ENCODE measurements at regions of chr4 and their contacts with region 1.

Region 1: DNA sequence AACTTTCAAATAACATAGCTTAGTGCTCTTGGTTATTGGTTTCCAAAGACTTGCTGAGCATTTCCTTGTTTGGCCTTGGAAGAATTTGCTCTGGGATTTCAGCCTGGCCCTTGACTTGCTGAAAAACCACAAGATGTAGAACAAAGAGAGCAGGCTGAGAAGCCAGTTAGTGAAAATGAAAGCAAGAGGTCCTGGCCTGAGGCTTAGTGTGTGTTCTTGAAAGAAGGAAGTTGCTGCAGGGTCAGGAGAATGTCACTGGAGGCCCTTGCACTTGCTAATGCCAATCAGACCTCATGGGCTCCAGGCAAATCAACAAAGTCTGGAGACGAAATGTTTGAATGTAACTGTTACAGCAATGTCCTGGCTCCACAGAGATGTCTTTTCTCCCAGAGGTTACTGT is 79.4 kb downstream of the SYNPO2 start:
- DNase-seq: peak in 1 of 2 experiments; percentile 54
- H3K4me3 ChIP-seq: no peak overlapping the region
- H3K27ac ChIP-seq: no peak overlapping the region
- H3K4me1 ChIP-seq: peaks cover 0 to 7% (median 5%) of the 10 kb centered on the region in 4 experiments; a peak in 6 of 7 replicates
- H3K27me3 ChIP-seq: no peaks in the 10 kb centered on the region
- CTCF ChIP-seq: no peak
- EP300 ChIP-seq: no peak
- POLR2A ChIP-seq: no peak
- RAD21 ChIP-seq: 0 out of 4 replicates have a peak, but pooled peaks of 1 of the 2 experiments have one; percentile 8

Region 2: GRCh38 chr4:118746292-118746919 is 221.6 kb before region 1 on chr4:
- CTCF ChIA-PET with region 1: interaction called, 12 read pairs
- POLR2A ChIA-PET with region 1: no interaction called
- DNase-seq: no peak
- H3K4me3 ChIP-seq: no peak overlapping the region
- H3K27ac ChIP-seq: no peak overlapping the region
- H3K4me1 ChIP-seq: no peaks in the 10 kb centered on the region
- H3K27me3 ChIP-seq: no peaks in the 10 kb centered on the region
- CTCF ChIP-seq: no peak
- EP300 ChIP-seq: no peak
- POLR2A ChIP-seq: no peak
- RAD21 ChIP-seq: no peak

Region 3: DNA sequence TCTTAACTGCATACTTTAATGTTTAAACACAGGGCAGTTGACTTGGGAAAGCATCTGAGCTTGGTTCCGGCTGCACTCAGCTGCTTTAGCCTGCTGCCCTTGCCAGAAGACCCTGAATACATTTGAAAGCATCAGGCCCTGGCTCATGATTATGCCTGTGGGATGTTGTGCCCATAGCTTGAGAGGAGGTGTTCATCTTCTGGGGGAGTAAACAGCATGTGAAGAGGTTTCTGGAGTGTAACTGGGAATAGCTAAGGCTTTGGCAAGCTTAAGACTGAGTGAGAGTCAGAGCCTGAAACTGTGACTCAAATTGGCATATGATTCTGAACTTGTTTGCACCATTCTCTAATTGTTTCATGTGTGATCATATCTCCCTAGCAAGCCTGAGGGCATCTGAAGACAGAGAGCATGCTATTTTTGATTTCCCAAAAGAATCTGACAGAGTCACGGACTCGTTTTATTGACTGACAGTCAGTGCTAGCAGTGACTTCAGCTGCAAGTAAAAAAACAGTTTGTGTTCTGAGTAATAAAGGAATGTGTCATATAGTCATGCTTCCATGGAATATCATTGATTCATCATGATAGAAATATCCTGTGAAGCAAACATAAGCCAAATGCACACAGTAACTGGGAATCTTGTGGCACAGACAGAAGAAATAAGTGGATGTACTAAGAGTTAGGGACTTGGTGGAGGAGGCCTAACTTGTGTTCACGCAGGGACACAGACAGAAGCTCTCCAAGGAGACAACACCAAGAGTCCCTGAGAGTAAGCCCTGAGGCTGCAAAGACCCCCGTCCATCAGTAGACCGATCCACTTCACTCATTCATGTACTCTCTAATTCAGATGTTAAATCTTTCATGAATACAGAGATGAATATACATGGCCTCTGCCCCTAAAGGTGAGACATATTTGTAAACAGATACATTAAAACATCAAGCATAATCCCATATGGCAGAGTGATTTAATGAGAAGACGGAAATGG is 21.4 kb after region 1 on chr4:
- CTCF ChIA-PET with region 1: no interaction called
- POLR2A ChIA-PET with region 1: no interaction called
- DNase-seq: no peak
- H3K4me3 ChIP-seq: no peak overlapping the region
- H3K27ac ChIP-seq: no peak overlapping the region
- H3K4me1 ChIP-seq: peaks cover 0 to 5% (median 0%) of the 10 kb centered on the region in 4 experiments; a peak in 1 of 7 replicates
- H3K27me3 ChIP-seq: no peaks in the 10 kb centered on the region
- CTCF ChIP-seq: no peak
- EP300 ChIP-seq: no peak
- POLR2A ChIP-seq: no peak
- RAD21 ChIP-seq: no peak

Region 4: GRCh38 chr4:119046263-119046662 is 78.3 kb after region 1 on chr4:
- CTCF ChIA-PET with region 1: no interaction called
- POLR2A ChIA-PET with region 1: no interaction called
- DNase-seq: no peak
- H3K4me3 ChIP-seq: no peak overlapping the region
- H3K27ac ChIP-seq: no peak overlapping the region
- H3K4me1 ChIP-seq: peaks cover 0 to 2% (median 0%) of the 10 kb centered on the region in 4 experiments; a peak in 3 of 7 replicates
- H3K27me3 ChIP-seq: no peaks in the 10 kb centered on the region
- CTCF ChIP-seq: no peak
- EP300 ChIP-seq: no peak
- POLR2A ChIP-seq: no peak
- RAD21 ChIP-seq: no peak

Region 5: GRCh38 chr4:119103263-119103662 is 135.3 kb after region 1 on chr4:
- CTCF ChIA-PET with region 1: no interaction called
- POLR2A ChIA-PET with region 1: no interaction called
- DNase-seq: no peak
- H3K4me3 ChIP-seq: no peak overlapping the region
- H3K27ac ChIP-seq: no peak overlapping the region
- H3K4me1 ChIP-seq: no peaks in the 10 kb centered on the region
- H3K27me3 ChIP-seq: no peaks in the 10 kb centered on the region
- CTCF ChIP-seq: no peak
- EP300 ChIP-seq: no peak
- POLR2A ChIP-seq: no peak
- RAD21 ChIP-seq: no peak

Region 6: GRCh38 chr4:119260528-119261250 is 292.7 kb after region 1 on chr4:
- CTCF ChIA-PET with region 1: no interaction called
- POLR2A ChIA-PET with region 1: no interaction called
- DNase-seq: no peak
- H3K4me3 ChIP-seq: no peak overlapping the region
- H3K27ac ChIP-seq: no peak overlapping the region
- H3K4me1 ChIP-seq: no peaks in the 10 kb centered on the region
- H3K27me3 ChIP-seq: no peaks in the 10 kb centered on the region
- CTCF ChIP-seq: no peak
- EP300 ChIP-seq: no peak
- POLR2A ChIP-seq: no peak
- RAD21 ChIP-seq: no peak